ENCODE measurements at regions of chr12 and their contacts with region 1.

Region 1: DNA sequence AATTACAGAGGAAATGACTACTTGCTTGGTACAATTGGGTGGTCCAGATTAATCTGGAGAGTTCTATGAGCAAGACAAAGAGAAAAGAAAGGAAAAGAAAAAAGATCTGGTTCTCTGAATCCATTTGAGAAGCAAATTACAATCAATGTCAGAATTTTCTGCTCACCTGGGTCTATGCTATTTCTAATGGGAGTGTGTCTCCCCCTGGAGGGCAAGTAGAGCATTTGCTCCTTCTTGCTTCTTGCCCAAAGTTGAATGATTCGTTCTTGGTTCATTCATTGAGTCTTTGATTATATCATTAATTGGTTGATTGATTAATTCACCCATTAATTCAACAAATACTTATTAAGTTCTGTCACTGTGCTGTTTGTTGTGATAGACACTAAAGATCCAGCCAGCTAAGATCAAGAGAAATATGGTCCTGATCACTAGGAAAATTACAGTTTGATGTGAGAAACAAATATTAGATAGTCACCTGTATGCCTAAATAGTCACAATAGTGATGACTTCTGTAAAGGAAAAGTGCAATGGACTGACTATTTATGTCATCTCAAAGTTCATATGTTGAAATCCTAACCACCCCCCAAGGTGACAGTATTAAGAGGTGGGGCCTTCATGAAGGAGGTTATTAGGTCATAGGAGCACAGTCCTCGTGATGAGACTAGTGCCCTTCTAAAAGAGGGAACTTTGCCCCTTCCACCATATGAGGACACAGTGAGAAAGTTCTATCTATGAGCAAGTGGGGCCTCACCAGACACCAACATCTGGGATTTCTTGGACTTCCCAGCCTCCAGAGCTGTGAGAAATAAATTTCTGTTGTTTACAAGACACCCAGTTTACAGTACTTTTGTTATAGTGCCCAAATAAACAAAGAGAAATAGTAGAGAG is 8.0 kb upstream of the ASB8 start:
- DNase-seq: no peak
- H3K4me3 ChIP-seq: no peak overlapping the region
- H3K27ac ChIP-seq: no peak overlapping the region
- H3K4me1 ChIP-seq: no peaks in the 10 kb centered on the region
- H3K27me3 ChIP-seq: no peaks in the 10 kb centered on the region
- CTCF ChIP-seq: peak; percentile 60 to 83 (median 74)
- POLR2A ChIP-seq: no peak

Region 2: DNA sequence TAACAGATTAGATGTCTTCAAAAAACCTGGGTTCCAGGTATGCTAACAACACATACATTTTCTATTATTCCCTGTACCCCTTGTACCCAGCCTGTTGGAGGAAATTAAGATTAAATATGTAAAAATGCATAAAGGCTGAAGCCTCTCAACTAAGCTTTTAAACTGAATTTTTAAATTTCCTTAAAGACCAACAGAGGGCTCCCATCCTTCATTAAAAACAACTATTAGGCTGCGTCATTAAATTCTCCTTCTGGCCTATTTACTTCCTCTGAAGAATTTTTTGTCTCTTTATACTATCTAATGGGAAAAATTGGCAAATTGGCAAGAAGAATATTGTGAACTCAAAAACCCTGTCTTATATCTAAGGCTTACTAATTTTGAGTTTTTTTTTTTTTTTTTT is 81.3 kb before region 1 on chr12:
- intact Hi-C with region 1: loop called (anchors 2 kb)
- DNase-seq: no peak
- H3K4me3 ChIP-seq: no peak overlapping the region
- H3K27ac ChIP-seq: no peak overlapping the region
- H3K4me1 ChIP-seq: no peaks in the 10 kb centered on the region
- H3K27me3 ChIP-seq: no peaks in the 10 kb centered on the region
- CTCF ChIP-seq: peak in 2 of 4 experiments; percentile 34 to 35
- POLR2A ChIP-seq: no peak

Measured in prostate gland (tissue), 2 donors.